PC-3 (cell line): ENCODE measurements at regions of chr7 and their contacts with region 1.

Region 1: GRCh38 chr7:27774717-27775328 is 34.9 kb downstream of the TAX1BP1 start:
- DNase-seq: peak; percentile 70
- ATAC-seq: peak; percentile 58; the same call in 1 of the 2 replicates
- H3K4me3 ChIP-seq: no peak overlapping the region
- H3K27ac ChIP-seq: no peak overlapping the region
- H3K4me1 ChIP-seq: peaks cover 38% of the 10 kb centered on the region
- H3K27me3 ChIP-seq: no peaks in the 10 kb centered on the region
- CTCF ChIP-seq: peak; percentile 91

Region 2: GRCh38 chr7:27689591-27690164 is 85.1 kb before region 1 on chr7:
- CTCF ChIA-PET with region 1: no interaction called
- POLR2A ChIA-PET with region 1: no interaction called
- intact Hi-C with region 1: loop called (anchors 1 kb)
- DNase-seq: peak; percentile 67
- ATAC-seq: peak; percentile 93
- H3K4me3 ChIP-seq: no peak overlapping the region
- H3K27ac ChIP-seq: no peak overlapping the region
- H3K4me1 ChIP-seq: peaks cover 18% of the 10 kb centered on the region
- H3K27me3 ChIP-seq: no peaks in the 10 kb centered on the region
- CTCF ChIP-seq: peak; percentile 89

Region 3: GRCh38 chr7:27793780-27794179 is 19.0 kb after region 1 on chr7:
- CTCF ChIA-PET with region 1: no interaction called
- POLR2A ChIA-PET with region 1: no interaction called
- intact Hi-C with region 1: no loop called
- DNase-seq: peak; percentile 52
- ATAC-seq: peak; percentile 73
- H3K4me3 ChIP-seq: no peak overlapping the region
- H3K27ac ChIP-seq: no peak overlapping the region
- H3K4me1 ChIP-seq: peaks cover 7% of the 10 kb centered on the region
- H3K27me3 ChIP-seq: no peaks in the 10 kb centered on the region
- CTCF ChIP-seq: no peak

Region 4: GRCh38 chr7:28378574-28379149 is 603.8 kb after region 1 on chr7:
- CTCF ChIA-PET with region 1: no interaction called
- POLR2A ChIA-PET with region 1: interaction called, 10 read pairs
- intact Hi-C with region 1: no loop called
- DNase-seq: peak; percentile 84
- ATAC-seq: peak; percentile 54
- H3K4me3 ChIP-seq: no peak overlapping the region
- H3K27ac ChIP-seq: 0 out of 2 replicates have a peak overlapping the region, but pooled peaks have one; percentile 8
- H3K4me1 ChIP-seq: peaks cover 12% of the 10 kb centered on the region
- H3K27me3 ChIP-seq: no peaks in the 10 kb centered on the region
- CTCF ChIP-seq: no peak